ENCODE measurements at regions of chr20 and their contacts with region 1.

Region 1: GRCh38 chr20:59850018-59850641 is 83.3 kb downstream of the SYCP2 start:
- DNase-seq: peak; percentile 45
- H3K4me3 ChIP-seq: no peak overlapping the region
- H3K27ac ChIP-seq: no peak overlapping the region
- H3K4me1 ChIP-seq: no peaks in the 10 kb centered on the region
- CTCF ChIP-seq: peak; percentile 74

Region 2: GRCh38 chr20:59598625-59599310 is 251.4 kb before region 1 on chr20:
- CTCF ChIA-PET with region 1: no interaction called
- POLR2A ChIA-PET with region 1: no interaction called
- intact Hi-C with region 1: loop called (anchors 5 kb)
- DNase-seq: peak; percentile 47
- H3K4me3 ChIP-seq: no peak overlapping the region
- H3K27ac ChIP-seq: no peak overlapping the region
- H3K4me1 ChIP-seq: no peaks in the 10 kb centered on the region
- CTCF ChIP-seq: peak; percentile 93

Region 3: DNA sequence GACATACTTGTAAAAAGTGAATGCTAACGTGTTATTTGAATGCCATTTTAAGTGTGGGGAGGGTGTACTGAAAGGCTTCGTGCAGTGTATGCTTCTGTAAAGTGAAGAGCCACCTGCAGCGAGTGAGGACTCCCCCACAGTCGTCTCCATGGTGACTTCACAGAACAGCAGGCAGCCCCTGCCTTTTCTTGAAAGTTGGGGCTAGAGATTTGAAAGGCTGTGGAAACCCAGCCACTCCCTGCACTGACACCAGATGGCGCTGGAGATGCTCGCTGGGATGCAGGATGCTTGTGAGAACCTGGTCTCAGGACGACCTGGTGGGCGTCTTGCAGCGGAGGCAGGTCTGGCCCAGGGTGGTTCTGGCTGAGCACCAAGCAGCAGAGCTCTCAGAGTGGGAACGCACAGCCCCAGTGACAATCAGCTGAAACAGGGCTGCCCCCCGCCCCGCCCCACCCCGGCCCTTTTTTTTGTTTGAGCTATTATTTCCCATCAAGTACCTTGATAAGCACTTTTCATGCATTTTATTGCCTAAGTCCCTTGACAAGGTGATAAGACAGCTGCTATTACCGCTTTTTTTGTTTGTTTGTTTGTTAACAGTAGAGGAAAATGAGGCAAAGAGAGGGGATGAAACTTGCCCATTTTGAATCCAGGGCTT is 67.0 kb before region 1 on chr20:
- CTCF ChIA-PET with region 1: no interaction called
- POLR2A ChIA-PET with region 1: no interaction called
- intact Hi-C with region 1: loop called (anchors 2 kb)
- DNase-seq: peak; percentile 50
- H3K4me3 ChIP-seq: no peak overlapping the region
- H3K27ac ChIP-seq: no peak overlapping the region
- H3K4me1 ChIP-seq: no peaks in the 10 kb centered on the region
- CTCF ChIP-seq: peak; percentile 85

Region 4: DNA sequence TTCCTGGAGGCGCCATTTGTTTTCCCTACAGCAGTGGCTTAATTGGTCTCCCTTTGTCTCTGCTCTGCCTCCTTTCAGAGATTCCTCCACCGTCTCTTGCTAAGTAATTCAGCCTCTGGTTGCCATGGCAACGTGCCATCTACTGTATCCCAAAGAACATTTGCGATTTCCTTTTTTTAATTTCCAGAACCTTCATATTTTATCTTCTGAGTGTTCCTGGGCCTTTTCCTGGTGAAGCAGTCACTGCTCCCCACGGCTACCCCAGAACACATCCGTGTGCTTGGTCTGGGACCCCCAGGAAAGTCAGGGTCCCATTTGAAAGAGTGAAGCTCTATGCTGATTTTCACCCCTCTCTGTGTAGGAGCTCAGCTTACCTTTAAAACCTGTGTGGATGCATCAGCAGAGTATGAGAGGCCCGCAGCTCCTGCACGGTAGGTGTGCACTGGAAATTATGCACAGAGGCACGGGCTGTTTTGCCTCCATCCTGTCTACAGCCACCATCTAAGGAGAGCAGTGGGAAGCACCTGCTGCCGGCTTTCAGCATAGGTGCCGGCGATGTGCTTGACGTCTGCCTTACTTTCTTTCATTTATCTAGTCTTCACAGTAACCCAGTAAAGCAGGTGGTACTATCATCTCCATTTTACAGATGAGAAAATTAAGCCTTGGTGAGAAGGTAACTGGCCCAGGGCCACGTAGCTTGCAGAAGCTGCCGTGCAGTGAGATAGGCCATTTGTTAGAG is 39.5 kb before region 1 on chr20:
- CTCF ChIA-PET with region 1: no interaction called
- POLR2A ChIA-PET with region 1: no interaction called
- intact Hi-C with region 1: no loop called
- DNase-seq: no peak
- H3K4me3 ChIP-seq: no peak overlapping the region
- H3K27ac ChIP-seq: no peak overlapping the region
- H3K4me1 ChIP-seq: no peaks in the 10 kb centered on the region
- CTCF ChIP-seq: no peak